Endothelial cell of umbilical vein (primary cell): ENCODE measurements at regions of chr1 and their contacts with region 1.

Region 1: DNA sequence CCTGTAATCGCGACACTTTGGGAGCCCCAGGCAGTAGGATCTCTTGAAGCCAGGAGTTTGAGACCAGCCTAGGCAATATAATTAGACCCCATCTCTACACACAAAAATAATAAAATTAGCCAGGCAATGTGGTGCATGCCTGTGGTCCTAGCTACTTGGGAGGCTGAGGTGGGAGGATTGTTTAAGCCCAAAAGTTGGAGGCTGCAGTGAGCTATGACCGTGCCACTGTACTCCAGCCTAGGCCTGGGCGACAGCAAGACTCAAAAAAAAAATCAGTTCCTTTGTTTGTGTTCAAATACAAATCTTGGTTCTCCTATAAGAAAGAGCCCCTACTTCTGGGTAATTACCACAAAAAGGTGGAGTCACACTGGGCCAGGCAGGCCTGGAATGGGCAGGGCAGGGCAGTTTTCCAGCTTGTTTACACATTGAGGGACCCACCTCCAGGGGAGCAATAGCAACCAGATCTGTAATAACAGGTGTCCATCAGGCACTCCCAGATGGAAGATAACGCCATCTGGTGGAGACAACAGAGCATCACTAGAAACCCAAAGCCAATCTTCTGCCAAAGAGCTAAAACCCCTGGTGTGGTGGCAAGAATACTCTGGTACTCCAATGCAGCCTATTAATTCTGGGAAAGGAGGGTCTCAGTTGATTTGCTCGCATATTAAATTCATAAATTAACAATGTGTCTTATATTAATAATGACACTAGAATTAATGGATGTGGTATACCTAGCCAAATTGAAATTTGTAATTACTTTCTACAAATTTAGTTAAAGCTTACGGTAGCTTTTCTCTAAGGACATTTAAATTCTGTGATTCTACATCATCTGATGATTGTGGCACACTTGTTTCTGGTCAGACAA is 13.2 kb downstream of the PPP1R15B start:
- DNase-seq: peak; percentile 80
- H3K4me3 ChIP-seq: no peak overlapping the region
- H3K27ac ChIP-seq: no peak overlapping the region
- H3K4me1 ChIP-seq: no peaks in the 10 kb centered on the region
- H3K27me3 ChIP-seq: no peaks in the 10 kb centered on the region
- CTCF ChIP-seq: peak; percentile 80 to 86
- POLR2A ChIP-seq: no peak

Region 2: GRCh38 chr1:204207136-204207616 is 191.3 kb before region 1 on chr1:
- CTCF ChIA-PET with region 1: interaction called, 19 read pairs
- POLR2A ChIA-PET with region 1: no interaction called
- dilution Hi-C with region 1: no loop called
- intact Hi-C with region 1: no loop called
- DNase-seq: peak; percentile 41
- H3K4me3 ChIP-seq: no peak overlapping the region
- H3K27ac ChIP-seq: no peak overlapping the region
- H3K4me1 ChIP-seq: no peaks in the 10 kb centered on the region
- H3K27me3 ChIP-seq: no peaks in the 10 kb centered on the region
- CTCF ChIP-seq: peak; percentile 89 to 97
- POLR2A ChIP-seq: no peak

Region 3: DNA sequence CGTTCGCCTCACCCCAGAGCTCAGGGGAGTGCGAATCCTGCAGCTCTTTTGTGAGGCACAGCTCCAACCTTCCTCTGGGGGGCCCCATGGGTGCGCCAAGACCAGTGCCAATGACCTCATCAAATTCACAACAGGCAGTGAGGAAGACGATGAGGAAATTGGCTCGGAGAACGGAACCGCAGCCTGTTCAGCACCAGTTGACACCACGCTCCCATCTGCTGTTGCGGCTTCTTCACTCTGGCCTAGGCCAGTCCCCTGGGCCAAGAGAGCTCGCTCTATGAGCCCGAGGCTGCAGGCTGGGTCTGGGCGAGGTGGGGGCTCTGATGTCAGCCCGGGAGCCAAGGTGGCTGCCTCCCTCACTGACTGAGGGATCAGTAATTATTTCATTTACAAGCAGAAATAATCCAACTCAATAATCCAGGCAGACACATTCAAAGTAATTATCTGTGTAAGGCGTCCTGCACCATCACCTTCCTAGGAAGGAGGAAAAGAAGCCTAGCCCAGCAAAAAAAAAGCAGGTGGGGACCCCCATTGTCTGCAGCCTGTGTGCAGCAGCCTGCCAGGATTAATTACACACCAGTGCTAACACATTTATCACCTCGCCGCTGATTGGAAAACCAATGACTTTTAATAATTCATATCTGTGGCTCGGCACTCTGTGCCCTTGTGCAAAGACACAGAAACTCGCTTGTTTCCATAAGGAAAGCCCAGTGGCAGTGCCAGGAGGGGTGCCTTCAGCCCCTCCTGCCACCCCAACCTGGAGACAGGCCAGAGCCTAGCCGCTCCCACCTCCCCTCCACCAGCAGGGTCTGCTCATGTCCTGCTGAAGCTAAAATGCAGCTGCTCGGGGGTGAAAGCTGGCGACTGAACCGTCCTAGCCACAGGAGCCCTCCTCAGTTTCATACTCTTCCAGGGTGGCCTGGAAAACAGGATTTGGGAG is 40.6 kb before region 1 on chr1:
- CTCF ChIA-PET with region 1: interaction called, 79 read pairs
- POLR2A ChIA-PET with region 1: no interaction called
- dilution Hi-C with region 1: no loop called
- intact Hi-C with region 1: loop called (anchors 1 kb)
- DNase-seq: peak; percentile 49
- H3K4me3 ChIP-seq: no peak overlapping the region
- H3K27ac ChIP-seq: no peak overlapping the region
- H3K4me1 ChIP-seq: peaks cover 47% of the 10 kb centered on the region
- H3K27me3 ChIP-seq: no peaks in the 10 kb centered on the region
- CTCF ChIP-seq: peak in 1 of 2 donors; percentile 33
- POLR2A ChIP-seq: no peak

Region 4: GRCh38 chr1:204384994-204385352 is 13.5 kb before region 1 on chr1:
- CTCF ChIA-PET with region 1: interaction called, 164 read pairs
- POLR2A ChIA-PET with region 1: interaction called, 3 read pairs
- dilution Hi-C with region 1: no loop called
- intact Hi-C with region 1: no loop called
- DNase-seq: peak; percentile 78
- H3K4me3 ChIP-seq: no peak overlapping the region
- H3K27ac ChIP-seq: no peak overlapping the region
- H3K4me1 ChIP-seq: peaks cover 9% of the 10 kb centered on the region
- H3K27me3 ChIP-seq: no peaks in the 10 kb centered on the region
- CTCF ChIP-seq: no peak
- POLR2A ChIP-seq: no peak

Region 5: DNA sequence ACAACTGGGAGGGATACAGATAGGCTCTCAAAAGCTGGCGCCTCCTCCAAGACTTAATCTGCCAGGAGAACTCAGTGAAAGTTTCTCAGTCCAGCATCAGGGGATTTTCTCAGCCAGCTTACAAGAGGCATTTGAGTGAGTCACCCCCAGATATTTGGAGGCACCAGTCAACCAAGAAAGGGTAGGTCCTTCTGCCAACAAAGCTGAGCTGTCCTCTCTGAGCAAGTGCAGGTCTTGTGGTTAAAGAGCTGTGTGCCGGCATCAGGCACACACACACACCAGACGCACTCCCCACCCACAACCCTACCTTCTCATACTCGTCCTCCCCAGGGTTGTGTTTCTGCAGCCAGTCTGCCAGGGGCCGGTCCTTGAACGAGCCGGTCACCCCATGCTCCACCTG is 40.2 kb after region 1 on chr1:
- CTCF ChIA-PET with region 1: interaction called, 12 read pairs
- POLR2A ChIA-PET with region 1: no interaction called
- dilution Hi-C with region 1: no loop called
- intact Hi-C with region 1: no loop called
- DNase-seq: peak; percentile 62
- H3K4me3 ChIP-seq: no peak overlapping the region
- H3K27ac ChIP-seq: peak overlapping the region; percentile 37
- H3K4me1 ChIP-seq: peaks cover 42% of the 10 kb centered on the region
- H3K27me3 ChIP-seq: no peaks in the 10 kb centered on the region
- CTCF ChIP-seq: no peak
- POLR2A ChIP-seq: no peak

Region 6: GRCh38 chr1:204506961-204507387 is 108.5 kb after region 1 on chr1:
- CTCF ChIA-PET with region 1: interaction called, 57 read pairs
- POLR2A ChIA-PET with region 1: no interaction called
- dilution Hi-C with region 1: no loop called
- intact Hi-C with region 1: no loop called
- DNase-seq: peak; percentile 97
- H3K4me3 ChIP-seq: peak overlapping the region; percentile 32 to 94 (median 92)
- H3K27ac ChIP-seq: peak overlapping the region; percentile 76
- H3K4me1 ChIP-seq: peaks cover 34% of the 10 kb centered on the region
- H3K27me3 ChIP-seq: no peaks in the 10 kb centered on the region
- CTCF ChIP-seq: no peak
- POLR2A ChIP-seq: no peak